Mammary epithelial cell (primary cell): ENCODE measurements at regions of chr18 and their contacts with region 1.

Region 1: DNA sequence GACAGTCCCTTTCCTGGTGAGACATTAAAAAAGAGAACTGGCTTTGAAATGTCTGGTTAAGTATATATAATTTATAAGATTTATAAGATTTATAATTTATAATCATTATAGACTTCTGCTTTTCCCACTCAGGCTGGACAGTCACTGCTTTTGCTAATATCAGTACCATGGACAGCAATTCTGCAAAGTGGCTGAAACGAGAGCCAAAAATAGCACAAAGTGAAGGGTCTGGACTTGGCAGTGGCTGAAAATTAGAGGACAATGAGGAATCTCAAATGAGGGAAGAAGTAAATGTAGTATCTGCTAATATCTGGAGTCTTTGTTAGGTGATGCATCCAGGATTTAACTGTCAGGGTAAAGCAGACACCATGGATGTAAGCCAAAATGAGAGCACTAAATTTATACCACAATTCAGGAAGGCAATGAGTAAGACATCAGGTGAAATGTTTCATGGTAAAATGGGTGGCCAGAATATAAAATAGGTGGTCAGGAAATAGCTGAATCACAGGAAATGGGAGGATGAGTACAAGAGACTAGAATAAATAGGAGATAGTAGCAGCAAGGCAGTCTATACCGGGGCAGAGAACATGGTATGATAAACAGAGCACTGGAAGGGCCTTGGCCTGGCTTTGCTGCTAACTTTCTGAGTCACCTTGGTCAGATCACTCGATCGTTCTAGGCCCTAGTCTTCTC is 39.6 kb upstream of the BOD1L2 start:
- DNase-seq: peak; percentile 20
- H3K4me3 ChIP-seq: no peak overlapping the region
- H3K27ac ChIP-seq: no peak overlapping the region
- H3K4me1 ChIP-seq: no peaks in the 10 kb centered on the region
- H3K27me3 ChIP-seq: no peaks in the 10 kb centered on the region
- CTCF ChIP-seq: no peak

Region 2: DNA sequence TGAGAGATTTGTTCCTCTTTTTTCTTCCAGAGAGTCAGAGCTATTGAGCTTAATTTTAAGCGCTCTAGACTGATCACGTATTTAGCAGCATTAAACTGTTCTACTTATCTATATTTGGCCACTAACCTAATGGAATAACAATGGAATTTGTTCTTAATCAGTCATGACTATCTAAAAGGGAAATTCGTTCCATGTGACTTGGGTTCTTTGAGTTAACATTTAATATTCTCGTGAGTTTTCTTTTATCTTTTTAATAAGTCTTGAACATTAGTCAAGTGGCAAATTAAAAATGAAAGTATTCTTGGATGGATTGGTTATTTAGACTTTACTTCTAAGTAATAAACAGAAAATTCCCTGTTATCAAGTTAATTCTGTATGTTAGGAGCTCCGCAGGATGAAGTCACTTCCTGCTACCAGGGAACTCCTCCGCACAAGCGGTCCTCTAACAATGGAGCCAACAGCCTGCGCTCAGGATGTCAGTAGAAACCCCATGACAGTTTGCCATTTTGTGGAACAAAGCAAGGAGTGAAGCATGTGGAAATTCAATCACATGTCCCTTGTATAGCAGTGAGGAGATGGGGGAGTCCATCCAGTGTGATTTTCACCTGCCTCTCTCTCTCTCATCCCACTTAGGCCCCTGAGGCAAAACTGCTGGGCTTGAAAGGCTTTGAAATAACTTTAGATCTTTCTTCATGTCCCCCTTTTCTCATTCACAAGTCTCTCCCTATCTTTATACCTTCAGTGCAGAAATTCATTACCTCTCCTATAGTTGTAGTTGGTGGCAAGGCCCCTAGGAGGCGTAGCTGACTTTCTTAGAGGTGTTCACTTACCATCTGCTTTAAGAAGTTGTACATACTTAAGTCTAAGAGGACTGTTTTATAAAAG is 318.0 kb before region 1 on chr18:
- CTCF ChIA-PET with region 1: no interaction called
- dilution Hi-C with region 1: no loop called
- in situ Hi-C with region 1: no loop called
- intact Hi-C with region 1: no loop called
- DNase-seq: peak; percentile 14
- H3K4me3 ChIP-seq: no peak overlapping the region
- H3K27ac ChIP-seq: no peak overlapping the region
- H3K4me1 ChIP-seq: no peaks in the 10 kb centered on the region
- H3K27me3 ChIP-seq: no peaks in the 10 kb centered on the region
- CTCF ChIP-seq: peak; percentile 65 to 72

Region 3: DNA sequence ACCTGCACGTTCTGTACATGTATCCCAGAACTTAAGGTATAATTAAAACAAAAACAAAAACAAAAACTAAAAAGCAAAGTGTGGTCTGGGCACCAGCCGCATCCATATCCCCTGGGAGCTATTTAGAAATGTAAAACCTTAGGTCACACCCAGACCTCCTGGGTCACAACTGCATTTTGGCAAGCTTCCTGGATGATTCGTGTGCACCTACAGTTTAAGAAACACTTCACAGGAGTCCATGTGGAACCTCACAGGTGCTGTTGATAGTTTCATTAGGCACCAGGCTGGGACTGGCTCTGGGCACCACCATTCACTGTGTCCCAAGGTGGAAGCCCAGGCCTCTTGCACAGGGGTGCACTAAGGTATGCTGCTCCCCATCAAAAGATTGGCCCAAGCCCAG is 64.0 kb before region 1 on chr18:
- CTCF ChIA-PET with region 1: no interaction called
- dilution Hi-C with region 1: loop called (anchors 5 kb)
- in situ Hi-C with region 1: no loop called
- intact Hi-C with region 1: no loop called
- DNase-seq: no peak
- H3K4me3 ChIP-seq: no peak overlapping the region
- H3K27ac ChIP-seq: no peak overlapping the region
- H3K4me1 ChIP-seq: no peaks in the 10 kb centered on the region
- H3K27me3 ChIP-seq: no peaks in the 10 kb centered on the region
- CTCF ChIP-seq: no peak

Region 4: GRCh38 chr18:57353940-57354461 is 246.7 kb after region 1 on chr18:
- CTCF ChIA-PET with region 1: no interaction called
- dilution Hi-C with region 1: no loop called
- in situ Hi-C with region 1: no loop called
- intact Hi-C with region 1: loop called (anchors 10 kb)
- DNase-seq: peak; percentile 13
- H3K4me3 ChIP-seq: no peak overlapping the region
- H3K27ac ChIP-seq: no peak overlapping the region
- H3K4me1 ChIP-seq: no peaks in the 10 kb centered on the region
- H3K27me3 ChIP-seq: peaks cover 29% of the 10 kb centered on the region
- CTCF ChIP-seq: no peak